ENCODE measurements at regions of chr16 and their contacts with region 1.

Region 1: DNA sequence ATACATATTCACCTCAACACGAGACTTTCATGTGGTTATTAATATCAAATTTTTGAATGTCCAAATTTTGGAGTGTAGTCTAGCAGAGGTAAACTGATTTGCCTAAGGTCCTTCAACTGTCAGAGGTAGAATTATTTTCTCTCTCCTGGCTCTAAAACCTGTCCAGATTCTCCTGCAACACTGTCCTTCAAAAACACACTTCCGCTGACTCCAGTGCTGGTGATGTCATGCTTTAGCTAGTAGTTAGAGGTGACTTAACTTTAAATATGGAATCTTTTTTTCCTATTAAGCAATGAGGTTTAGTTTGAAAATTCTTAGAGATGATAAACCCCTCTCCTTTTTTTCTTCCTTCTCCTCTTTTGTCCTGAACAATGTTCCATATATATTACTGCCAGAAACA is 10.8 kb upstream of the CBLN1 start:
- DNase-seq: no peak
- H3K4me3 Mint-ChIP-seq: no peak overlapping the region
- H3K27ac Mint-ChIP-seq: no peak overlapping the region
- H3K4me1 Mint-ChIP-seq: no peaks in the 10 kb centered on the region
- H3K27me3 Mint-ChIP-seq: no peaks in the 10 kb centered on the region
- CTCF ChIP-seq: no peak

Region 2: GRCh38 chr16:49280105-49280741 is 12.2 kb before region 1 on chr16:
- CTCF ChIA-PET with region 1: no interaction called
- intact Hi-C with region 1: no loop called
- DNase-seq: no peak
- H3K4me3 Mint-ChIP-seq: no peak overlapping the region
- H3K27ac Mint-ChIP-seq: no peak overlapping the region
- H3K4me1 Mint-ChIP-seq: no peaks in the 10 kb centered on the region
- H3K27me3 Mint-ChIP-seq: peaks cover 31% of the 10 kb centered on the region
- CTCF ChIP-seq: no peak

Region 3: DNA sequence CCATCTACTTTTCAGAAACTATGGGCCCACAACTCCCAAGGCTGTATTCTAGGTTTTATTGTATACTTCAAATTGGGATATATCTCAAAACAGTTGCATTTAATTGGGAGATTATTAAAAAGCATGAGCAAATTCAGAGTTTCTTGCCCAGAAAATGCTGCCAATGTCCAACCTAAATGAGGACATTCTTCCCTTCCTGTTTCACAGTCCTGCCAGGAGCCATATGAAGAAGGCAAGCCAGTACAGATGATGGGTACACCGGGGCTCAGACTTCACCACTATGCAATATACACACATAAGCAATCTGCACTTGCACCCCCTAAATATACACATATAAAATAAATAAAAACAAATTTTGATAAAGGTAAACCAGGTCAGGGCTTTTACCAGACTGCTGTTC is 23.2 kb after region 1 on chr16:
- CTCF ChIA-PET with region 1: no interaction called
- intact Hi-C with region 1: loop called (anchors 1 kb)
- DNase-seq: no peak
- H3K4me3 Mint-ChIP-seq: no peak overlapping the region
- H3K27ac Mint-ChIP-seq: no peak overlapping the region
- H3K4me1 Mint-ChIP-seq: no peaks in the 10 kb centered on the region
- H3K27me3 Mint-ChIP-seq: no peaks in the 10 kb centered on the region
- CTCF ChIP-seq: no peak

Region 4: DNA sequence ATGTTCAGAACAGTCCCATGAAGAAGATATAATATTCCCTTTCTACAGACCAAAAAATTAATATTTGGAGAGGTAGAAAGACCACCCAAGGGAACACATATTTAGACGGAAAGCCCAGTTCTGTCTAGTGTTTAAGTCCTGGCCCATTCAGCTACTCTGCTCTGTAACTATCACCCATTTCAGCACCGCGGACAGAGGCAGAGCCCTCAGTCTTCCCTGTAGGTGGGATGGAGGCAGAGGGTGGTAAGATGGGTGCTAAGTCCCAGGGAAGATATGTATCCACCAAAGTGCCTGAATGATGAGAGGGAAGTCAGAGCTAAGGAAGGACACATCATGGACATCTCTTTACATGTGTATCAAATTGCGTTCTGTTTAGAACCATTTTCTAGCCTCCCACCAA is 53.4 kb after region 1 on chr16:
- CTCF ChIA-PET with region 1: no interaction called
- intact Hi-C with region 1: no loop called
- DNase-seq: no peak
- H3K4me3 Mint-ChIP-seq: no peak overlapping the region
- H3K27ac Mint-ChIP-seq: no peak overlapping the region
- H3K4me1 Mint-ChIP-seq: no peaks in the 10 kb centered on the region
- H3K27me3 Mint-ChIP-seq: peaks cover 45% of the 10 kb centered on the region
- CTCF ChIP-seq: no peak

Region 5: DNA sequence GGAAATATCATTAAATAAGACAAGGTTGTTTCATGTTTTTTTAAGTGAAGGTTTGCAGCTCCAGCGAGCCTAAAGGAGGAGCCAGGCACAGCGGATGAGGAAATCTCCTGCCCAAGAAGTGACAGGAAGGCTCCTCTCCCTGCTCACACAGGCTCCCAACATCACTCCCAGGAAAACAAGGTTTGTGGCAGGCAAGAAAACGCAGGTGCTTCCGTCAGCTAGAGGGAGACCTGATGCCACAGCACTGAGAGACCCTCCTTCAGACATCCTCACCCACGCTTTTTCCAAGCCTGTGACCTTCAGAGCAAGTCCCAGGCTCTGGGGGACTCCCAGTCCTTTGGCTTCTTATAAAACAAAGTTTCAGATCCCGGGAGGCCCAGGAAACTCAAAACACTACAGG is 473.8 kb after region 1 on chr16:
- CTCF ChIA-PET with region 1: no interaction called
- intact Hi-C with region 1: no loop called
- DNase-seq: no peak
- H3K4me3 Mint-ChIP-seq: no peak overlapping the region
- H3K27ac Mint-ChIP-seq: no peak overlapping the region
- H3K4me1 Mint-ChIP-seq: no peaks in the 10 kb centered on the region
- H3K27me3 Mint-ChIP-seq: peaks cover 100% of the 10 kb centered on the region
- CTCF ChIP-seq: no peak

Measured in Calu3 (cell line).